Stomach (tissue), 19 donors: ENCODE measurements at regions of chr1 and their contacts with region 1.

Region 1: DNA sequence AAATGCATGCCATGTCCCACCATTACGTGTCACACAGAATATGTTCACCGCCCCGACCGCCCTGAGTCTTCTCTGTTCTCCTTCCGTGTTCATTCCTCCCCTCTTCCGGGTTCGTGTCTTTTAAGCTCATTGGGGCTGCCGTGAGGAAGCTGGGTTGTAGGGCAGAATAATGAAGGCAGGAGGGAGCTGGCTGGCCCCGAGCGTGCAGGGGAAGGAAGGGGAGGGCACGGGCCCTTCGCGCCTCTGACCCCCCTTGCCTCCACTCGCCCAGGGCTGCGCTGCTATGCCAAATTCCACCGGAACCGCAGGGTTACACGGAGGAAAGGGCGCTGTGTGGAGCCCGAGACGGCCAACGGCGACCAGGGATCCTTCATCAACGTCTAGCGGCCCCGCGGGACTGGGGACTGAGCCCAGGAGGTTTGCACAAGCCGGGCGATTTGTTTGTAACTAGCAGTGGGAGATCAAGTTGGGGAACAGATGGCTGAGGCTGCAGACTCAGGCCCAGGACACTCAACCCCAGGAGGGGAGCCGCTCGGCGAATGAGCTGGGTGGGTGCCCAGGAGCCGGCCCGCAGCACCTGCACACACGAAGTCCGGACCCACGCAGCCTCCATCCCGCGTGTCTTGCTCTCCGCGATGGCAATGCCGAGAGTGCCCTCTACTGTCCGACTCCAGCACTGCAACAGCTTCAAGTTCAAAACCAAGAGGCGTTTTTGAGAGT is 16.5 kb upstream of the AGTRAP start:
- DNase-seq: peak; percentile 88 to 90
- H3K4me3 ChIP-seq: peak overlapping the region; percentile 36 to 53 (median 47)
- H3K27ac ChIP-seq: peak overlapping the region; percentile 61 to 87 (median 77)
- H3K4me1 ChIP-seq: peaks cover 0 to 43% (median 20%) of the 10 kb centered on the region in 4 donors
- H3K27me3 ChIP-seq: peaks cover 0 to 5% (median 0%) of the 10 kb centered on the region in 3 donors
- CTCF ChIP-seq: peak in 5 of 7 experiments; percentile 88 to 96 (median 95)
- EP300 ChIP-seq: no peak
- POLR2A ChIP-seq: no peak

Region 2: DNA sequence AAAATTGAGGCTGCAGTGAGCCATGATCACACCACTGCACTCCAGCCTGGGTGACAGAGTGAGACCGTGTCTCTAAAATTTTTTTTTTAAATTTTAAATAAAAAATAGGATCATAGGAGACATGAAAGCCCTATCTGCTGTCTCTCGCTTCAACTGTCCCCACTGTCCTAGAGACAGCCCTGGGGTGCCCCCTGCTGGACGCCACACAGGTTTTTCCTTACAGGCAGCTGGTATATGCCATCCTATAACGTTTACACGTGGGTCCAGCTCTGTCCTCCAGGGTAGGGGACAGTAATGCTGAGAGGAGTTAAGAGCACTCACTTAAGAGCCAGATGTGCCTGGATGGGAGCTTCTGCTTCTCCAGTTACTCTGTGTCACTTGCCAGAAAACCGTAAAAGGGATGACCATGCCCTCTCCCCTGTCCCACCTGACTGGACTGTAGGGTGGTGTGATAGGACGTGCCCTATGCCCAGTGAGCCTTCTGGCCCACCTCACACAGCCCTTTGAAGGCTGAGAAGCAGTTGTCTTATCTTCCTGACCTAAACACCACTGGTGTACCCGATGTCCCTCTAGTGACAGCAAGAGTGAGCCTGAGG is 73.7 kb before region 1 on chr1:
- intact Hi-C with region 1: loop called (anchors 5 kb)
- DNase-seq: peak; percentile 82 to 89
- H3K4me3 ChIP-seq: no peak overlapping the region
- H3K27ac ChIP-seq: no peak overlapping the region
- H3K4me1 ChIP-seq: peaks cover 28 to 30% (median 29%) of the 10 kb centered on the region in 4 donors
- H3K27me3 ChIP-seq: peaks cover 0 to 66% (median 20%) of the 10 kb centered on the region in 3 donors
- CTCF ChIP-seq: peak in 5 of 7 experiments; percentile 24 to 72 (median 49)
- EP300 ChIP-seq: no peak
- POLR2A ChIP-seq: no peak

Region 3: DNA sequence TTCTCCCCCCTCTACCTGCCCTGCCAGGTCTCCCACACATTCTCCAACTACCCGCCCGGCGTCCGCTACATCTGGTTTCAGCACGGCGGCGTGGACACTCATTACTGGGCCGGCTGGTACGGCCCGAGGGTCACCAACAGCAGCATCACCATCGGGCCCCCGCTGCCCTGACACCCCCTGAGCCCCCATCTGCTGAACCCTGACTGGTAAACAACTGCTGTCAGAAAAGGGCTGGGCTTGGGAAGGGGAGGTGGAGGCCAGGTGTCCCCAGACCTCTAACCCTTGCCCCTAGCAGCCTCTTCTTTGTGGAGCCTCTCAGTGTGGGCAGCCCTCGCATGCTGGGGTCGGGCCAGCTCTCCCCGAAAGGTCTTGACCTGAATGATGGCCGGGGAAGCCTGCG is 58.4 kb before region 1 on chr1:
- intact Hi-C with region 1: loop called (anchors 5 kb)
- DNase-seq: no peak
- H3K4me3 ChIP-seq: no peak overlapping the region
- H3K27ac ChIP-seq: no peak overlapping the region
- H3K4me1 ChIP-seq: peaks cover 0 to 22% (median 14%) of the 10 kb centered on the region in 4 donors
- H3K27me3 ChIP-seq: no peaks in the 10 kb centered on the region
- CTCF ChIP-seq: no peak
- EP300 ChIP-seq: no peak
- POLR2A ChIP-seq: no peak

Region 4: DNA sequence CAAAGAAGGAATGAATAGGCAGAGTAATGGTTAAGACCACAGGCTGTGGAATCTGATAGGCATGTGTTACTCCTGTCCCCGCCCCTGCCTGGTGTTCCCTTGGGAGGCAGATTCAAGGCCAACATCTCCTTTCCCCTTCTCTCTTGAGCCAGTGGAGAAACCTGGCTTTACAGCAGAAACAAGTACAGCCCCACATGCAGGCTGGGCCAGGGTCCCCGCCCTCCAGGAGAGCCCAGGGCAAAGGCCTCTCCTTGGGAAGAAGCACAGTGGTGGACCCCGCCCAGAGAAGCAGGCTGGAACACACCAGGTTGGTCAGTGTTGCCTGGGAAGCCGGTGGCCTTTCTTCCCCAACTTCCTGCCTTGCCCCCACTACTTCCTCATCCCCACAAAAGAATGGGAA is 49.3 kb after region 1 on chr1:
- intact Hi-C with region 1: no loop called
- DNase-seq: no peak
- H3K4me3 ChIP-seq: no peak overlapping the region
- H3K27ac ChIP-seq: no peak overlapping the region
- H3K4me1 ChIP-seq: no peaks in the 10 kb centered on the region
- H3K27me3 ChIP-seq: peaks cover 0 to 24% (median 0%) of the 10 kb centered on the region in 3 donors
- CTCF ChIP-seq: no peak
- EP300 ChIP-seq: no peak
- POLR2A ChIP-seq: no peak